Transverse colon (tissue), 4 donors: ENCODE measurements at regions of chr5 and their contacts with region 1.

Region 1: GRCh38 chr5:135034236-135034962 is 371 bp upstream of the PITX1 start:
- DNase-seq: peak; percentile 65
- H3K4me3 ChIP-seq: peak overlapping the region in 3 of 4 donors; percentile 45 to 71 (median 50)
- H3K27ac ChIP-seq: peak overlapping the region; percentile 73 to 85 (median 77)
- H3K4me1 ChIP-seq: peaks cover 26 to 44% (median 43%) of the 10 kb centered on the region in 4 donors
- H3K27me3 ChIP-seq: peaks cover 100% of the 10 kb centered on the region
- CTCF ChIP-seq: no peak
- EP300 ChIP-seq: no peak
- POLR2A ChIP-seq: no peak

Region 2: DNA sequence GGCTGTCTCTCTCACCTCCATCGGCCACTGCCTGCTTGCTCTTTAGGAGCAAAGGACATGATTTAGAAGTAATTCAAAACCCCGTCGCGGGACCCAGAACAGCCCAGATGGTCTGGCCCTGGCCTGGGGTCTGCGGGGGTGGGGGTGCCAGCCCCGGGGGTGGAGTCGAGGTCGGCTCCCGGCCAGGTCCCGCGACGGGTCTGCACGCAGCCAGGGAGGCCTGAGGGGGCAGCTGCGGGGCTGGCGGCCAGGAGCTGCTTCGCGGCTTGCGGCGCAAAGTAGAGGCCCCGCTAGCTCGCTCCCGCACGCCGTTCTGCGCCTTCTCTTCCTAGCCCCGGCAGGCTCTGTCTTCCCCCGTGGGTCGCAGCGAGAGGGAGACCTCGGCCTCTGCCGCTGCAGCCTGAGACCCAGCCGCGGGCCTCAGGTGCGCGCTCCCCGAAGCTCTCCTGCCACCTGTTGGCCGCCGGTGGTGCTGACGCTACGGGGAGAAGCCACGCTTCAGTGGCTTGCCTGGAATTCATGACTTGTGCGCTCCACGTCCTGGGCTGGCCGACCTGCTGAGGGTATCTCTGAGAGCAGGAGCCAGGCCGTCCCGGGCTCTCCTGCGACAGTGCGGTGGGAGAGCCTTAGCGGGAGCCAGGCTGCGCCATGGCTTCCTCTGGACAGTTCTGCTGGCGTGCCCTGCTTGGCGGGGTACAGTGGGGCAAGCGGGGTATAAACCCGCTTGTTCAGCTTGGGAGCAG is 156.9 kb after region 1 on chr5:
- in situ Hi-C with region 1: loop called in 1 of 4 experiments (anchors 25 kb)
- intact Hi-C with region 1: no loop called
- DNase-seq: peak; percentile 81
- H3K4me3 ChIP-seq: peak overlapping the region; percentile 25 to 54 (median 34)
- H3K27ac ChIP-seq: peak overlapping the region; percentile 22 to 48 (median 32)
- H3K4me1 ChIP-seq: peaks cover 3 to 11% (median 5%) of the 10 kb centered on the region in 4 donors
- H3K27me3 ChIP-seq: peaks cover 61% of the 10 kb centered on the region
- CTCF ChIP-seq: peak; percentile 84 to 94 (median 92)
- EP300 ChIP-seq: no peak
- POLR2A ChIP-seq: no peak